Mammary epithelial cell (primary cell): ENCODE measurements at regions of chr14 and their contacts with region 1.

Region 1: GRCh38 chr14:29548948-29549370 is 378.7 kb downstream of the PRKD1 start:
- DNase-seq: peak; percentile 39
- H3K4me3 ChIP-seq: no peak overlapping the region
- H3K27ac ChIP-seq: no peak overlapping the region
- H3K4me1 ChIP-seq: no peaks in the 10 kb centered on the region
- H3K27me3 ChIP-seq: no peaks in the 10 kb centered on the region
- CTCF ChIP-seq: peak; percentile 41 to 55

Region 2: GRCh38 chr14:28751467-28752058 is 797.4 kb before region 1 on chr14:
- CTCF ChIA-PET with region 1: no interaction called
- dilution Hi-C with region 1: no loop called
- in situ Hi-C with region 1: loop called in 1 of 2 experiments (anchors 25 kb)
- intact Hi-C with region 1: no loop called
- DNase-seq: peak; percentile 45
- H3K4me3 ChIP-seq: no peak overlapping the region
- H3K27ac ChIP-seq: no peak overlapping the region
- H3K4me1 ChIP-seq: no peaks in the 10 kb centered on the region
- H3K27me3 ChIP-seq: peaks cover 20% of the 10 kb centered on the region
- CTCF ChIP-seq: peak; percentile 79 to 84

Region 3: GRCh38 chr14:29927376-29928116 is 378.6 kb after region 1 on chr14 and contains the start of gene PRKD1:
- CTCF ChIA-PET with region 1: no interaction called
- dilution Hi-C with region 1: no loop called
- in situ Hi-C with region 1: no loop called
- intact Hi-C with region 1: loop called (anchors 5 kb)
- DNase-seq: peak; percentile 37
- H3K4me3 ChIP-seq: peak within 1 kb of the TSS; percentile 48 to 53 (median 48)
- H3K27ac ChIP-seq: no peak within 1 kb of the TSS
- H3K4me1 ChIP-seq: peaks cover 5% of the 10 kb centered on the region
- H3K27me3 ChIP-seq: no peaks in the 10 kb centered on the region
- CTCF ChIP-seq: no peak
- total RNA-seq, gene PRKD1: 1.4 to 6.3 TPM

Region 4: DNA sequence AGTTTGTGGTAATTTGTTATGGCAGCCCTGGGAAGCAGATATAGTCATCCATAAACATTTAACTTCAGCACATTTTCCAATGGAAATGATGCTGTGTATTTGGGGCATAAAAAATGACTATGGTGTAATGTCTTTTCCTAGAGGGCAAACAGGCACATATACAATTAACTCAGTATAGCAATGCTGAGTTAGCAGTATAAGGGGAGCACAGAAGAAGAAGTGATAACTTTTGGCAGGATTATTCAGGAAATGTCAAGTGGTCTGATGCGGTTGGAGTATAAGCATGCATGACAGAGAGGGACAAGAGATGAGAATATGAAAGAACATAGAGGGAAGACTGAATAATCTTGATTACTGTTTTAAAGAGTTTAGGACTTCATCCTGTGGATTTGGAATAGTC is 434.0 kb after region 1 on chr14:
- CTCF ChIA-PET with region 1: no interaction called
- dilution Hi-C with region 1: no loop called
- in situ Hi-C with region 1: no loop called
- intact Hi-C with region 1: no loop called
- DNase-seq: no peak
- H3K4me3 ChIP-seq: no peak overlapping the region
- H3K27ac ChIP-seq: no peak overlapping the region
- H3K4me1 ChIP-seq: no peaks in the 10 kb centered on the region
- H3K27me3 ChIP-seq: no peaks in the 10 kb centered on the region
- CTCF ChIP-seq: no peak

Region 5: DNA sequence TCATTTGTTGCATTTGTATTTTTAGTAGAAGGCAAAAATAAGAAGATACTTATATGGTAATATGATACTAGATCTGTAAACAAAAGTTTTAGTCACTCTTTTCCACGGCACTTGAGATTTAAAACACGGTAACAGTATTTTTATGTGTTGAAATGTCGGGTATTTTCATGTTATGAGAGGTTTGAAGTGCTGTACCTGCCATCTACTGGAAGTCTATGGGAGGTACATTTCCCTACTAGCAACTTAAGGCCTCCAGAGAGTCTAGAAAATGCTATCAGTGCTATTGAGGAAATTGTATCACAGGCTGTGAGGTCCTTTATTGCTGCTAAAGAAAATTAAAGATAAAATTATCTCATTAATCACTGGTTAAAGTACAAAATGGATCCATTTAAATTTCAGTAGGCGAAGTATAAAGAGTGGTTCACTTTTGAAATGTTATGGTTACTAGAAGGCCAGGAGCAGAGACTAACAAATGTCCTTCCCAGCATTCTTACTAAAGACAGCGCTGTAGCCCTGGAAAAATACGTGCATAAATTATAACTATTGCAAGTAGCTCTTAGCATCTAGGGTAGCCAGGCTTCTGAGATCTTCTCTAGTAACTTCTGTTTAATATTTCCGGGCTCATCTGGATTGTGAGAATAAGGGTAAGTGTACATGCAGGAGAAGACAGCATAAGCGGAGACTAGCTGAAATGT is 456.3 kb after region 1 on chr14:
- CTCF ChIA-PET with region 1: no interaction called
- dilution Hi-C with region 1: no loop called
- in situ Hi-C with region 1: loop called in 1 of 2 experiments (anchors 10 kb)
- intact Hi-C with region 1: loop called (anchors 1 kb)
- DNase-seq: peak; percentile 21
- H3K4me3 ChIP-seq: no peak overlapping the region
- H3K27ac ChIP-seq: no peak overlapping the region
- H3K4me1 ChIP-seq: no peaks in the 10 kb centered on the region
- H3K27me3 ChIP-seq: no peaks in the 10 kb centered on the region
- CTCF ChIP-seq: peak; percentile 37 to 57

Region 6: GRCh38 chr14:30214461-30215090 is 665.6 kb after region 1 on chr14:
- CTCF ChIA-PET with region 1: interaction called, 4 read pairs
- dilution Hi-C with region 1: no loop called
- in situ Hi-C with region 1: loop called (anchors 5 kb)
- intact Hi-C with region 1: loop called (anchors 1 kb)
- DNase-seq: peak; percentile 55
- H3K4me3 ChIP-seq: no peak overlapping the region
- H3K27ac ChIP-seq: no peak overlapping the region
- H3K4me1 ChIP-seq: peaks cover 5% of the 10 kb centered on the region
- H3K27me3 ChIP-seq: no peaks in the 10 kb centered on the region
- CTCF ChIP-seq: peak; percentile 68 to 70

Region 7: GRCh38 chr14:30270200-30271161 is 721.5 kb after region 1 on chr14:
- CTCF ChIA-PET with region 1: no interaction called
- dilution Hi-C with region 1: no loop called
- in situ Hi-C with region 1: no loop called
- intact Hi-C with region 1: loop called (anchors 5 kb)
- DNase-seq: peak; percentile 70
- H3K4me3 ChIP-seq: peak overlapping the region in 2 of 3 experiments; percentile 17 to 34
- H3K27ac ChIP-seq: no peak overlapping the region
- H3K4me1 ChIP-seq: peaks cover 8% of the 10 kb centered on the region
- H3K27me3 ChIP-seq: no peaks in the 10 kb centered on the region
- CTCF ChIP-seq: peak; percentile 90 to 97

Region 8: DNA sequence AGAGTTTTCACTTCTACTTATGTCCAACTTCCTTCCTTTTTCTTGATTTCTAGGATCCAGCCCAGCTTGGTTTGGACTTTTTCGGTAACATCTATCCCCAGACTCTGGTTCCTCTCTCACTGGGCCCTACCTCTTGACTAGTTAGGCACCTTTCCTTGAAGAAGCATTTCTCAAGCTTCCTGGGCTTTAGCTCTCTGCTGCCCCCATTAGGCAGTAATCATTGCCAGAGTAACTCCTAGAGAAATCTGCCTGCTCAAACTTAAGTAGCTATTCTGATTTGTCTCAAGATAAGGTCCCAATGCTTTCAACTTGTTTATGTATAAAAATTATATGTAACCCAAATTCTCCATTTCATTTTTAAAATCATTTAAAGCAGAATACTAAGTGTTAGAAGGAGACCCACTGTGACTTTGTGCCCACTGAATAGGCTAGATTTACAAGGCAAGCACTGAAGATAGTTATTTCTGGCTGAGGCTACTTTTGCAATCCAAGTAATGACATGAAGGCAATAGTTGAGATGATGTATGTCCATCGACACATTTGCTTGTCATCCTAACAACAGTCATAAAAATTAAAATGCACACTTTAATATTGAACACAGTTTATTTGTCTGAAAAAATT is 735.0 kb after region 1 on chr14:
- CTCF ChIA-PET with region 1: no interaction called
- dilution Hi-C with region 1: no loop called
- in situ Hi-C with region 1: no loop called
- intact Hi-C with region 1: loop called (anchors 5 kb)
- DNase-seq: peak; percentile 42
- H3K4me3 ChIP-seq: no peak overlapping the region
- H3K27ac ChIP-seq: no peak overlapping the region
- H3K4me1 ChIP-seq: no peaks in the 10 kb centered on the region
- H3K27me3 ChIP-seq: no peaks in the 10 kb centered on the region
- CTCF ChIP-seq: peak; percentile 92 to 95